ENCODE measurements at regions of chr7 and their contacts with region 1.

Region 1: GRCh38 chr7:100852048-100852872 is at the start of gene SLC12A9:
- DNase-seq: peak; percentile 97
- H3K4me3 ChIP-seq: peak within 1 kb of the TSS; percentile 76
- H3K27ac ChIP-seq: peak within 1 kb of the TSS; percentile 24
- H3K4me1 ChIP-seq: peaks cover 9% of the 10 kb centered on the region
- H3K27me3 ChIP-seq: no peaks in the 10 kb centered on the region
- CTCF ChIP-seq: peak; percentile 95
- total RNA-seq, gene SLC12A9: 23.8 and 26.1 TPM in 2 replicates

Region 2: GRCh38 chr7:100503345-100503725 is 348.9 kb before region 1 on chr7:
- CTCF ChIA-PET with region 1: no interaction called
- POLR2A ChIA-PET with region 1: no interaction called
- intact Hi-C with region 1: no loop called
- DNase-seq: no peak
- H3K4me3 ChIP-seq: no peak overlapping the region
- H3K27ac ChIP-seq: no peak overlapping the region
- H3K4me1 ChIP-seq: no peaks in the 10 kb centered on the region
- H3K27me3 ChIP-seq: no peaks in the 10 kb centered on the region
- CTCF ChIP-seq: no peak

Region 3: DNA sequence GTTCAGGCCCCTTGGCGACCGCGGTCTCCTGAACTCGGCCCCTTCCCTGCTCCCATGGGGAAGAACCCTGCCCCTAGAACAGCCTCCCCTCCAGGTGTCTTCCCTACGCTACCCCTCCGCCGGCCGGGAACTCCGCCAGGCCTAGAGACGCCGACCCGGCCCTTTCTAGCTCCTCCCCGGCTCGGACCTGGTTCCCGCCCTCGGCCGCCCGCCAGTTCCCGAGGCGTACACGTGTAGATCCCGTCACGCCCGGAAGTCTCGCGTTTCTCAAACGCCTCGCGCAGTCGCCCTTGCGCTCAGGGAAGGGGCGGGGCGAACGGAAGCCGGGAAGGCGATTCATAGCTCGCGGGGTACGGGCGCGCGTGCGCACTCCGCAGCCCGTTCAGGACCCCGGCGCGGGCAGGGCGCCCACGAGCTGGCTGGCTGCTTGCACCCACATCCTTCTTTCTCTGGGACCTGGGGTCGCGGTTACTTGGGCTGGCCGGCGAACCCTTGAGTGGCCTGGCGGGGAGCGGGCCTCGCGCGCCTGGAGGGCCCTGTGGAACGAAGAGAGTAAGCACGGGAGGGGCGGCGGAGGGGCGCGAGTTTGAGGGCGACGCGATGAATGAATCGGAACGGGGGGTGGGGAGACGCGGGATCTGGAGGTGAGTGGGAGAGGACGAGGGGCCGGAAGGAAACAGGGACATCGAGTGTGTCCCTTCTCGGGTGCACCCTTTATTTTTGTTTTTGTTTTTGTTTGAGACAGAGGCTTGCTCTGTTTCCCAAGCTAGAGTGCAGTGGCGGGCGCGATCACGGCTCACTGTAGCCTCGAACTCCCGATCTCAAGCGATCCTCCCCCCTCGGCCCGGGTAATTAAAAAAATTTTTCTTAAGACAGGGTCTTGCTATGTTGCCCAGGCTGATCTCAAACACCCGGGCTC is 146.2 kb before region 1 on chr7 and contains the start of gene POP7:
- CTCF ChIA-PET with region 1: interaction called, 30 read pairs
- POLR2A ChIA-PET with region 1: no interaction called
- intact Hi-C with region 1: loop called (anchors 1 kb)
- DNase-seq: peak; percentile 99
- H3K4me3 ChIP-seq: peak within 1 kb of the TSS; percentile 77
- H3K27ac ChIP-seq: peak within 1 kb of the TSS; percentile 95
- H3K4me1 ChIP-seq: peaks cover 6% of the 10 kb centered on the region
- H3K27me3 ChIP-seq: peaks cover 17% of the 10 kb centered on the region
- CTCF ChIP-seq: no peak
- total RNA-seq, gene POP7: 68.8 and 72.6 TPM in 2 replicates

Region 4: GRCh38 chr7:100803398-100804233 is 48.6 kb before region 1 on chr7:
- CTCF ChIA-PET with region 1: interaction called, 50 read pairs
- POLR2A ChIA-PET with region 1: no interaction called
- intact Hi-C with region 1: loop called (anchors 1 kb)
- DNase-seq: peak; percentile 73
- H3K4me3 ChIP-seq: no peak overlapping the region
- H3K27ac ChIP-seq: peak overlapping the region; percentile 45
- H3K4me1 ChIP-seq: peaks cover 20% of the 10 kb centered on the region
- H3K27me3 ChIP-seq: no peaks in the 10 kb centered on the region
- CTCF ChIP-seq: no peak

Region 5: GRCh38 chr7:100827330-100828227 is 24.7 kb before region 1 on chr7 and contains the start of gene EPHB4:
- CTCF ChIA-PET with region 1: interaction called, 20 read pairs
- POLR2A ChIA-PET with region 1: interaction called, 7 read pairs
- intact Hi-C with region 1: no loop called
- DNase-seq: peak; percentile 97
- H3K4me3 ChIP-seq: peak within 1 kb of the TSS; percentile 98
- H3K27ac ChIP-seq: peak within 1 kb of the TSS; percentile 80
- H3K4me1 ChIP-seq: peaks cover 8% of the 10 kb centered on the region
- H3K27me3 ChIP-seq: no peaks in the 10 kb centered on the region
- CTCF ChIP-seq: peak; percentile 67
- total RNA-seq, gene EPHB4: 90.4 and 92.6 TPM in 2 replicates